ENCODE measurements at regions of chr6 and their contacts with region 1.

Region 1: GRCh38 chr6:3410385-3411360 is 46.2 kb downstream of the SLC22A23 start:
- DNase-seq: peak; percentile 59
- H3K4me3 ChIP-seq: no peak overlapping the region
- H3K27ac ChIP-seq: no peak overlapping the region
- H3K4me1 ChIP-seq: no peaks in the 10 kb centered on the region
- H3K27me3 ChIP-seq: no peaks in the 10 kb centered on the region
- CTCF ChIP-seq: peak; percentile 85 to 87
- POLR2A ChIP-seq: no peak

Region 2: GRCh38 chr6:2931970-2932748 is 478.5 kb before region 1 on chr6:
- CTCF ChIA-PET with region 1: no interaction called
- POLR2A ChIA-PET with region 1: no interaction called
- dilution Hi-C with region 1: no loop called
- intact Hi-C with region 1: no loop called
- DNase-seq: peak; percentile 84
- H3K4me3 ChIP-seq: no peak overlapping the region
- H3K27ac ChIP-seq: no peak overlapping the region
- H3K4me1 ChIP-seq: peaks cover 2% of the 10 kb centered on the region
- H3K27me3 ChIP-seq: no peaks in the 10 kb centered on the region
- CTCF ChIP-seq: peak; percentile 93 to 96
- POLR2A ChIP-seq: no peak

Region 3: GRCh38 chr6:3421791-3422434 is 11.2 kb after region 1 on chr6:
- CTCF ChIA-PET with region 1: interaction called, 25 read pairs
- POLR2A ChIA-PET with region 1: interaction called, 3 read pairs
- dilution Hi-C with region 1: no loop called
- intact Hi-C with region 1: no loop called
- DNase-seq: peak; percentile 85
- H3K4me3 ChIP-seq: no peak overlapping the region
- H3K27ac ChIP-seq: no peak overlapping the region
- H3K4me1 ChIP-seq: peaks cover 17% of the 10 kb centered on the region
- H3K27me3 ChIP-seq: no peaks in the 10 kb centered on the region
- CTCF ChIP-seq: no peak
- POLR2A ChIP-seq: no peak

Region 4: DNA sequence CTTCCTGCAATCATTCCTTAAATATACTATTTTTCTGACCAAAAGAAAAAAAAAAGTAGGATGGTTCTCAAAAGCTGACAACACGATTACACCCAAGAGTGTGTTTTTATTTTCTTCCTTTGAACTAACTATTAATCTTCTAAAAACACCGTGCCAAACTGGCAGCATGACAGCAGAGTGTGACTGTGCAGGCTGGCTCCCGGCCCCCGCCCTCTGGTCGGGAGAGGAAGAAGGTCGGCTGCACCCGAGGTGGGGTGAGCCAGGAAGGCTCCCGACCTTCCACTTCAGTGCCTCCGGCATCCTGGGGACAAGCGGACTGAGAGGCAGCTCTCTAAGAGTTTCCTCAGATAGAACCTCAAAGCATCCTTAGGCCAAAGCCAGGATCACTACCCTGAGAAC is 17.0 kb after region 1 on chr6:
- CTCF ChIA-PET with region 1: interaction called, 25 read pairs
- POLR2A ChIA-PET with region 1: no interaction called
- dilution Hi-C with region 1: no loop called
- intact Hi-C with region 1: no loop called
- DNase-seq: peak; percentile 36
- H3K4me3 ChIP-seq: no peak overlapping the region
- H3K27ac ChIP-seq: no peak overlapping the region
- H3K4me1 ChIP-seq: peaks cover 8% of the 10 kb centered on the region
- H3K27me3 ChIP-seq: peaks cover 0 to 1% of the 10 kb centered on the region in 2 experiments
- CTCF ChIP-seq: no peak
- POLR2A ChIP-seq: no peak

Region 5: GRCh38 chr6:3732345-3733141 is 321.9 kb after region 1 on chr6:
- CTCF ChIA-PET with region 1: interaction called, 37 read pairs
- POLR2A ChIA-PET with region 1: interaction called, 5 read pairs
- dilution Hi-C with region 1: no loop called
- intact Hi-C with region 1: loop called (anchors 1 kb)
- DNase-seq: peak; percentile 88
- H3K4me3 ChIP-seq: no peak overlapping the region
- H3K27ac ChIP-seq: no peak overlapping the region
- H3K4me1 ChIP-seq: peaks cover 40% of the 10 kb centered on the region
- H3K27me3 ChIP-seq: no peaks in the 10 kb centered on the region
- CTCF ChIP-seq: peak; percentile 79 to 84
- POLR2A ChIP-seq: peak; percentile 22

Region 6: GRCh38 chr6:3990692-3991501 is 580.2 kb after region 1 on chr6:
- CTCF ChIA-PET with region 1: interaction called, 7 read pairs
- POLR2A ChIA-PET with region 1: no interaction called
- dilution Hi-C with region 1: no loop called
- intact Hi-C with region 1: loop called (anchors 1 kb)
- DNase-seq: peak; percentile 91
- H3K4me3 ChIP-seq: no peak overlapping the region
- H3K27ac ChIP-seq: no peak overlapping the region
- H3K4me1 ChIP-seq: peaks cover 17% of the 10 kb centered on the region
- H3K27me3 ChIP-seq: no peaks in the 10 kb centered on the region
- CTCF ChIP-seq: peak; percentile 92 to 94
- POLR2A ChIP-seq: no peak

Region 7: GRCh38 chr6:4008324-4009047 is 597.8 kb after region 1 on chr6:
- CTCF ChIA-PET with region 1: interaction called, 4 read pairs
- POLR2A ChIA-PET with region 1: no interaction called
- dilution Hi-C with region 1: no loop called
- intact Hi-C with region 1: loop called (anchors 2 kb)
- DNase-seq: peak; percentile 76
- H3K4me3 ChIP-seq: no peak overlapping the region
- H3K27ac ChIP-seq: no peak overlapping the region
- H3K4me1 ChIP-seq: no peaks in the 10 kb centered on the region
- H3K27me3 ChIP-seq: no peaks in the 10 kb centered on the region
- CTCF ChIP-seq: peak; percentile 19 to 45
- POLR2A ChIP-seq: no peak

Measured in endothelial cell of umbilical vein (primary cell).